Activated B cell treated with CpG ODN at 0.5 μM for 24 hours (primary cell): ENCODE measurements at regions of chr17 and their contacts with region 1.

Region 1: DNA sequence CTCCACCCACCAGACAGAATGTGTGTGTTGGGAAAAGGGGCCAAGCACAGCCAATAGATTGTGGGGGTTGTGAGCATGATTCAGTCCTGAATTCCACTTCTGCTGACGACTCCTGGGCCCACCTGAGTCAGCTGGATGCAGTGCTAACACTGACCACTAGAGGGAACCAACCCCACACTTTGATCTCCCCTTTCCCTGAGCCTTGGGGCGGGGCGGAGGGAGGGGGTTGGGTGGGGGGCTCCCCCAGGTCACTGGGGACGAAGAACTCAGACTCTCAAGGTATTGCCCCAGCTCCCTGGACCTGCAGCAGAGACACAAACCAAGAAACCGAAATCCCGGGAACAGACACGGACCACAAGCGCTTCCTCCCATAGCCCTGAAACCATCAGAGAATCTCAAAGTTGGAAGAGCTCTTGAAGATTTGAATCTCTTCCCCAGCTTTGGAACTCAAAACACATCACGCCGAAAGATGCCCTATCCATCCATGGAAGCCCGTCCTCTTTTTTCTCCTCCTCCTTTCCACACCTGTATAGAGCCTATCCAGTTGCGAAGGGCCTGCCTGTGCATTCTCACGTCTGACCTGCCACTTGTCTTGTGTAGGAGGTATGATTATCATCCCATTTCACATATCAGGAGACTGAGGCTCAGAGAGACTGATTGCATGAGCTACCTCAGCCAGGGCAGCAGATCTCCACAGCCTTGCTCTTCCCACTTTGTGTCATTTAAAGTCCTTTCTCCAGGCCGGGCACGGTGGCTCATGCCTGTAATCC is 784 bp upstream of the CSHL1 start:
- DNase-seq: peak; percentile 59
- ATAC-seq: peak; percentile 57
- H3K4me3 Mint-ChIP-seq: no peak overlapping the region
- H3K27ac Mint-ChIP-seq: peak overlapping the region; percentile 35
- H3K4me1 Mint-ChIP-seq: peaks cover 52% of the 10 kb centered on the region
- H3K27me3 Mint-ChIP-seq: peaks cover 1% of the 10 kb centered on the region
- CTCF ChIP-seq: no peak

Region 2: DNA sequence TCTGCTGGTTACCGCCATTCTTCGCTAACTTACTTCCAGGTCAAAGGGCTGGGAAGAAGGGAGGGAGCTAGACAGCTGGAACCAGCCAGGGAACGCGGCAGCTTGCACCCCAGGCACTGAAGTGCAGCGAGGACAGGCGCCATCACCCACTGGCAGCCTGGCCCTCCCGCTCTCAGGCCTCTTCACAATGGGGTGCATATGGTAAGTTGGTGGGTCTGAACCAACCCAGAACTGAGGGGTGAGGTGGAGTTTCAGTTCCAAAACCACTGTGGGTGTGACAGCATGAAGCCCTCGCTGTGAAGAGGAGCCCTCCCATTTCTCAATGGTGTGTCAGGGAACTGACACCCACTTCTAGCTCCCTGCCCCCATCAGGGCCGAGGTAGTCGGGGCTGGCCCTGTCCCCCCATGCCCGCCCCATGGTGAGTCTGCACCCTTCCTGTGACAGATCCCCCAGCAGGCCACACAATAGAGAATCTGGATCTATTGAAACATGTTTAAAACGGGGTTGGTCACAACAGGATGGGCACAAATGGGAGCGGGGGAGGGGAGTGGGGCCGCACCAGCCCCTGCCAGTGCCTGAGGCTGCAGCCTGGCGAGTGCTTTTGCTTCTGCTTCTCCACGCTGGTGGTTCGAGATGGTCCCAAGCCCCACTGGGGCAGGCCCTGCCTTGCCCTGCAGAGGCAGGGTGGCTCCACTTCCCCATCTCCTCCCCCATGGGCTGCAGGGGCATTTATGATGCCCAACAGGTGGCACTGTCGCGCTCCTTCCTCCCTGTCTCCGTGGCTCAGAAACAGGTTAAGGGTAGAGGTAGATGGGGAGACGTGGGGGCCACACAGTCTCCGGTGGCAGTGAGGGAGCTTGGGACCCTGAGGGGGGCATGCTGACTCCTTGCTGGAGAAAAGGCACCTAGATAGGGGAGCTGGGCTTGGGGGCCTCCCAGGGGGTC is 214.2 kb before region 1 on chr17:
- CTCF ChIA-PET with region 1: no interaction called
- POLR2A ChIA-PET with region 1: no interaction called
- intact Hi-C with region 1: no loop called
- DNase-seq: peak; percentile 78
- ATAC-seq: peak; percentile 52
- H3K4me3 Mint-ChIP-seq: peak overlapping the region; percentile 96
- H3K27ac Mint-ChIP-seq: peak overlapping the region; percentile 97
- H3K4me1 Mint-ChIP-seq: peaks cover 70% of the 10 kb centered on the region
- H3K27me3 Mint-ChIP-seq: no peaks in the 10 kb centered on the region
- CTCF ChIP-seq: no peak

Region 3: GRCh38 chr17:63931099-63931561 is 19.3 kb after region 1 on chr17:
- CTCF ChIA-PET with region 1: interaction called, 11 read pairs
- POLR2A ChIA-PET with region 1: interaction called, 272 read pairs
- intact Hi-C with region 1: no loop called
- DNase-seq: peak; percentile 67
- ATAC-seq: peak; percentile 45
- H3K4me3 Mint-ChIP-seq: peak overlapping the region; percentile 98
- H3K27ac Mint-ChIP-seq: peak overlapping the region; percentile 96
- H3K4me1 Mint-ChIP-seq: peaks cover 89% of the 10 kb centered on the region
- H3K27me3 Mint-ChIP-seq: no peaks in the 10 kb centered on the region
- CTCF ChIP-seq: no peak

Region 4: DNA sequence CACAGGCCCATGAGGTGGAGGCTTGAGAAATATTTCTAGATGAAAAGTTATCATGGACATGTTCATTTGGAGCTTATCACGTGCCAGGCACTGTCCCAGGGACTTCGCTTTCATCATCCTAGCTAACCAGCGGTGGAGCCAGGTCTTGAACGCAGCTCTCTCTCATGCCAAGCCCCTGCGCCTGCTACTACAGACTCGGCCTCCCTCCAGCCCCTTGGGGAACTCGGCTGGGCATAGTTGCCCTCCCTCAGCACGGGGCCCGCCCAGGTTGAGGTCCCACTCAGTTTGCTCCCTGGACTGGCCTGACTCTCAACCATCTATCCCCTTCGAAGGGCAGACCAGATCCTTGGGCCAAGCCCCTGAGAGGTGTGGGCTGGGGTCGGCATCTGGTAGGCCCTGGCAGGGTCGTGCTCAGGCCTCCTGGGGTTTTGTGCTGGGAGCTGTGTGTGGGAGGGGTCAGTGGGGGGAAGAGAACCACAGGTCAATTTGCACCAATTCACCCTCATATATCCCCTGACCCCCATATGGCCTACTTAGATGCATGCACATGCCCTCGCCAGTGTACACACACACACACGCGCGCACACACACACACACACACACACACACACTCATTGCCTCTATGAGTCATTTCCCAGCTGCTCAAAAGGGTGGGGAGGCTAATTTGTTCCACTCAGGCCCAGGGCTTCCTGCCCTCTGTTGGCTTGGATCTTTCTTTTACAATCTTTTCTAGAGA is 73.0 kb after region 1 on chr17:
- CTCF ChIA-PET with region 1: interaction called, 21 read pairs
- POLR2A ChIA-PET with region 1: no interaction called
- intact Hi-C with region 1: loop called (anchors 1 kb)
- DNase-seq: no peak
- ATAC-seq: peak; percentile 89
- H3K4me3 Mint-ChIP-seq: no peak overlapping the region
- H3K27ac Mint-ChIP-seq: no peak overlapping the region
- H3K4me1 Mint-ChIP-seq: peaks cover 16% of the 10 kb centered on the region
- H3K27me3 Mint-ChIP-seq: no peaks in the 10 kb centered on the region
- CTCF ChIP-seq: no peak

Region 5: GRCh38 chr17:64281962-64282727 is 370.3 kb after region 1 on chr17:
- CTCF ChIA-PET with region 1: interaction called, 3 read pairs
- POLR2A ChIA-PET with region 1: no interaction called
- intact Hi-C with region 1: loop called (anchors 5 kb)
- DNase-seq: no peak
- ATAC-seq: peak; percentile 58
- H3K4me3 Mint-ChIP-seq: no peak overlapping the region
- H3K27ac Mint-ChIP-seq: no peak overlapping the region
- H3K4me1 Mint-ChIP-seq: no peaks in the 10 kb centered on the region
- H3K27me3 Mint-ChIP-seq: no peaks in the 10 kb centered on the region
- CTCF ChIP-seq: no peak

Region 6: GRCh38 chr17:64448665-64449512 is 537.0 kb after region 1 on chr17 and contains the start of gene MILR1:
- CTCF ChIA-PET with region 1: no interaction called
- POLR2A ChIA-PET with region 1: interaction called, 13 read pairs
- intact Hi-C with region 1: no loop called
- DNase-seq: no peak
- ATAC-seq: peak; percentile 98
- H3K4me3 Mint-ChIP-seq: peak within 1 kb of the TSS; percentile 85
- H3K27ac Mint-ChIP-seq: peak within 1 kb of the TSS; percentile 95
- H3K4me1 Mint-ChIP-seq: peaks cover 44% of the 10 kb centered on the region
- H3K27me3 Mint-ChIP-seq: no peaks in the 10 kb centered on the region
- CTCF ChIP-seq: no peak
- total RNA-seq, gene MILR1: 13.5 and 13.9 TPM in 2 replicates